A549 (cell line): ENCODE measurements at regions of chrX and their contacts with region 1.

Region 1: GRCh38 chrX:151713859-151714258 is 2.0 kb upstream of the FATE1 start:
- DNase-seq: peak; percentile 37 to 61
- ATAC-seq: peak; percentile 65 to 93; a peak in 4 of 6 replicates
- H3K4me3 ChIP-seq: no peak overlapping the region
- H3K27ac ChIP-seq: no peak overlapping the region
- H3K4me1 ChIP-seq: no peaks in the 10 kb centered on the region
- CTCF ChIP-seq: peak; percentile 52
- EP300 ChIP-seq: no peak
- POLR2A ChIP-seq: no peak
- RAD21 ChIP-seq: peak; percentile 68 to 73

Region 2: DNA sequence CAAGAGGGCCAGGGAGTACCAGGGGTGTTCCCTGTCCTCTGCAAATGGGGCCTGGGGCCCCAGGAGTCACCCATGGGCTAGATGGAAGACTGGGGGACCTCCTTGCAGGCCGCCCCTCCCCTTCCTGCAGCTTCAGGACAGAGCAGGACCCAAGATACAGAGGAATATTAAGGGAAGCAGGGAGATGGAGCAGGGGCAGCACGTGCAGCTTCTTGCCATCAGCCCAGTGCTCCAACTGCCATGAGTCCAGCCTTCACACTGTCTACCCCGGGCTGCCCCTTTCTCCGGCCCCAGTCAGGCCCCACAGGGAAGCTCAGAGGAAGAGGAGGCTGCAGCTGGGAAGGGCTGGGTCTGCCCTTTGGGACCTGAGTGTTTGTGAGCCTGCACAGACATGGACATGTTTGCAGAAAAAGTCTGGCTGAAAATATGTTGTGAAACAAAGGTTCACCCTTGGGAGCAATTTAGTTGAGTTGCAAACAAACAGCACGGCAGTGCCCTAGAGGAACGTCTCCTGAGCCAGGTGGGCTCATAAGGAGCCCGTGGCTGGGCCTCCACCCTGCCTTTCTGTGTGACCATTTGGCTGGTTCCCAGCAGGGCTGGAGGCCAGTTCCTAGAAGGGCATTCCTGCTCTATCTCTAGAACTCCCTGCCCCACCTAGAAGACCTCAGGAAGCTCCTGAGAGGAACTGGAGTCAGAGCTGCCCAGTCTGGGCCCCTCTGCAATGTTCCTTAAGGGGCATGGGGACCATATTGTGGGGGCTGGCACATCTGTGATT is 10.9 kb after region 1 on chrX:
- CTCF ChIA-PET with region 1: interaction called, 12 read pairs
- POLR2A ChIA-PET with region 1: no interaction called
- DNase-seq: no peak
- ATAC-seq: no peak
- H3K4me3 ChIP-seq: no peak overlapping the region
- H3K27ac ChIP-seq: no peak overlapping the region
- H3K4me1 ChIP-seq: no peaks in the 10 kb centered on the region
- CTCF ChIP-seq: no peak
- EP300 ChIP-seq: no peak
- POLR2A ChIP-seq: no peak
- RAD21 ChIP-seq: no peak

Region 3: DNA sequence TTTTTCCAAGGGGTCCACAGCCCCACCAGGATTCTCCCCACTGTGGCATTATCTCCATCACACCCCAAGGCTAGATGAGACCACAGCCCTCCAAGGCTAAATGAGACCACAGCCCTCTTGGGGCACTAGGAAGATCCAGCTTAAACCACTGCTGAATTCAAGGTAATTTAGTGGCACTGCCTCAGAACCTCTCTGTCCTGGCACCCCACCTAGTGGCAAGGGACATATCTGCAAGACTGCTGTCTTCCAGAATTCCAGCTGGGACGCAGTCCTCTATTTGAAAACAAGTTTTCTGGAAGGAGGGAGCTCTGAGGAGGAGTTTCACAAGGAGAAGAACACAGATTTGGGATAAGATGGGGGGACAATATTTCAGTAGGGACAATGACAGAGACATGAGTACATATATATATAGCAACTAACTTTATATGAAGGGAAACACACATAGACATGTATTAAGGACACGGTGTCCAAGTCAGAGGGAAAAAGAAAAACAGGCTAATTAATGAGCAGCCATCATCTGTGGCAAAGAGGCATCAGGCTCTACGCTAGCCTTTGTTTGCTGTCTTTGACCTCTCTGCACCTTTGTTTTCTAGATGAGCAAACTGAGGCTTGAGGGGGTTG is 1107.4 kb after region 1 on chrX:
- CTCF ChIA-PET with region 1: interaction called, 15 read pairs
- POLR2A ChIA-PET with region 1: no interaction called
- DNase-seq: peak; percentile 47 to 54
- ATAC-seq: peak; percentile 66 to 76; a peak in 4 of 6 replicates
- H3K4me3 ChIP-seq: no peak overlapping the region
- H3K27ac ChIP-seq: no peak overlapping the region
- H3K4me1 ChIP-seq: no peaks in the 10 kb centered on the region
- CTCF ChIP-seq: peak; percentile 56
- EP300 ChIP-seq: no peak
- POLR2A ChIP-seq: no peak
- RAD21 ChIP-seq: peak; percentile 59 to 67